HepG2 (cell line): ENCODE measurements at regions of chr2 and their contacts with region 1.

Region 1: DNA sequence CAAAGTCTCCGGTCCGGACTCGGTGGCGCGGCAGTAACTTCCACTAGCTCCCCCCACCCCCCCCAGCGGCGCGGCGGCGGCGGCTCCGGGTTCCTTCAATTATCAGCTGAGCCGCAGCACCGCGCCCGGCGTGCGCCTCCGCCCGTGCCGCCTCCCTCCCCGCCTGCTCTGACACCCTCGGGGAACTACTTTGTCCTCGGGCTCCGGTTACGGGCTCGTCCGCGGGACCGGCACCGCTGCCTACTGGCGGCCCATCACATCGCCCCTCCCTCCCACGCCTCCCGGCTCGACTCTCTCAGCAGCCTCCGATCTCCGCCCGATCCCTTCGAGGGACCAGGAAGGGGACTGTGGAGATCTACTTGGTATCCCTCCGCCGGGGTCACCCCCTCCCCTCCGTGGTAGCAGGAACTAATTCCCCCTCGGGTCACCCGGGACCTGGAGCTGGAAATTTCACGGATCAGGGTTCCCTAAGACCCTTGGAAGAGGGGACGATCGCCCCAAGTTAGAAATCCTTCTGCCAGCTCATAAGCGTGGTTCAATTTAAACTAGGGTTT is at the start of gene TRIP12:
- DNase-seq: peak; percentile 95
- ATAC-seq: peak; percentile 86
- H3K4me3 ChIP-seq: peak within 1 kb of the TSS; percentile 77 to 98 (median 87)
- H3K27ac ChIP-seq: peak within 1 kb of the TSS; percentile 95
- H3K4me1 ChIP-seq: peaks cover 38% of the 10 kb centered on the region
- H3K27me3 ChIP-seq: no peaks in the 10 kb centered on the region; a peak in 1 of 5 replicates
- CTCF ChIP-seq: 0 out of 2 replicates have a peak, but pooled peaks have one; percentile 22
- EP300 ChIP-seq: peak; percentile 6 to 43; a peak in 1 of 4 replicates
- POLR2A ChIP-seq: peak in 1 of 2 experiments; percentile 34; a peak in 3 of 4 replicates
- RAD21 ChIP-seq: no peak
- total RNA-seq, gene TRIP12: 153 and 257 TPM in 2 replicates

Region 2: DNA sequence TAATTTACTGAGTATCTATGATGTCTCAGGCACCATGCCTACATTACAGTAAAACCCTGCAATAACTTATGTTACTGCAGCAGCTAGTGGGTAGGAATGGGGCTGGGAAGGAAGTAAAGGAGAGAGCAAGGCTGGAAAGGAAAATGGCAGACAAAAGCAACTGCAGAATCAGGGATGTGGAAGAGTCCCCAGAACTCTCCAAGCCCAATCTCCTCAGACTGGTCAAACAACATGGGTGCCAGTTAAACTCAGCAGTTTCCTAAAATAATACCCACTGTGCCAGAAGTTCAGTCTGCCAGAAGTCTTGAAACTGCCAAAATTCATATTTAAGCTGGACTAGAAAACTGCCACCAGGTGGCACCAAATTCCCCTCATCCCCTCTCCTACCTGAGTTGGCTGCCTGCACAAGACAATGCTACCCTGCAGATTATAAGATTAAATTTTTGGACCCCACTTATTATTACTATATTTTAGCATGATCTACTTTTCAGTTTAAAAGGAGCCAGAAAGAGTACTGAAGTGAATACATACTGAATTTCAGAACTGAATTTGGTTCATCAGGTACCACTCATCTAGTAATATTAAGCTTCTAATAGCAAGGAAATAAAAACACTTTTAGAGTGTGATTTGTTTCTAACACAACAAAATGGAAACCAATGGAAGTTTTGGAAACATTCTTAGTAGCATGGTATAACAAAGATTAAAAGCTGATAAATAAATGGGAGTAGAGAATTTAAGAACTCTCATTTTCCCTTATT is 120.8 kb before region 1 on chr2:
- CTCF ChIA-PET with region 1: no interaction called
- POLR2A ChIA-PET with region 1: interaction called, 4 read pairs
- in situ Hi-C with region 1: no loop called
- intact Hi-C with region 1: loop called (anchors 5 kb)
- DNase-seq: peak; percentile 52
- ATAC-seq: peak; percentile 87
- H3K4me3 ChIP-seq: no peak overlapping the region
- H3K27ac ChIP-seq: no peak overlapping the region
- H3K4me1 ChIP-seq: no peaks in the 10 kb centered on the region
- H3K27me3 ChIP-seq: no peaks in the 10 kb centered on the region
- CTCF ChIP-seq: peak; percentile 67
- EP300 ChIP-seq: no peak
- POLR2A ChIP-seq: no peak
- RAD21 ChIP-seq: peak; percentile 31; the same call in 1 of the 2 replicates

Region 3: DNA sequence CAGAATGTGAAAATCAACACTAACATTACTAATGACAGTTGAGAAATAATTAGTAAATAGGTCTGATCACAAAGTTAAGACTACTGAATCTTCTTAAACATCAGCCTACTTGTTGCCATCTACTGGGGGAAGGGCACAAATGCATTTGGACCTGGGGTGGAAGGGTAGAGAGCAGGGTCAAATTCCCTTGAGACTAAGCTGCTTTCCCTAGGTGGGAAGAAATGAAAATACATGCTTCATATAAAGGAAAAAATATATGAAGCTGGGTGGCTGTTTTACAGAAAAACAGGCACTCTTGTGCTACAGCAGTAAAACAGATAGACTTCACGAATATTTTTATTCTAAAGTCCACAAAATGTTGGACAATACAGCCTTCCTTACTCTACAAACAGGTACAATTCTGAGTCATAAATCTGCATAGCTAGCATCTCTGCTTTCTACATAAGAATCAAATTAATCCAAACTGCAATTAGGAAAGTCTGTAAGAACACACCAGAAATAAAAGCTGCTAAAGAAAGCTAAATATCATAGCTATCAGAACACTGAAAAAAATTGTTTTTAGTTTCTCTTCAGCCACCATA is 11.0 kb before region 1 on chr2:
- CTCF ChIA-PET with region 1: no interaction called
- POLR2A ChIA-PET with region 1: interaction called, 20 read pairs
- in situ Hi-C with region 1: no loop called
- intact Hi-C with region 1: loop called (anchors 1 kb)
- DNase-seq: peak; percentile 35
- ATAC-seq: peak; percentile 87
- H3K4me3 ChIP-seq: no peak overlapping the region
- H3K27ac ChIP-seq: peak overlapping the region; percentile 4
- H3K4me1 ChIP-seq: peaks cover 49% of the 10 kb centered on the region
- H3K27me3 ChIP-seq: no peaks in the 10 kb centered on the region
- CTCF ChIP-seq: peak; percentile 67
- EP300 ChIP-seq: no peak
- POLR2A ChIP-seq: no peak
- RAD21 ChIP-seq: no peak